AG04450 (cell line): ENCODE measurements at regions of chr13 and their contacts with region 1.

Region 1: GRCh38 chr13:59210543-59210942 is 953.2 kb downstream of the DIAPH3 start:
- DNase-seq: no peak
- H3K4me3 ChIP-seq: no peak overlapping the region
- H3K27ac ChIP-seq: no peak overlapping the region
- H3K27me3 ChIP-seq: peaks cover 4% of the 10 kb centered on the region
- CTCF ChIP-seq: no peak

Region 2: GRCh38 chr13:59176775-59177174 is 33.8 kb before region 1 on chr13:
- CTCF ChIA-PET with region 1: no interaction called
- POLR2A ChIA-PET with region 1: interaction called, 11 read pairs
- DNase-seq: no peak
- H3K4me3 ChIP-seq: no peak overlapping the region
- H3K27ac ChIP-seq: no peak overlapping the region
- H3K27me3 ChIP-seq: no peaks in the 10 kb centered on the region
- CTCF ChIP-seq: peak; percentile 11; the same call in 1 of the 2 replicates